Activated T-helper 2 cell treated with anti-CD3 and anti-CD28 coated beads, Interferon-gamma antibody, Interleukin-2, Interleukin-4, amounts not matched to agents 10 μg/mL and 5 μg/mL and 100 μg/mL, durations not matched to agents 14 hours and 24 hours and 36 hours (primary cell): ENCODE measurements at regions of chr12 and their contacts with region 1.

Region 1: GRCh38 chr12:98424726-98425401 is 90.5 kb upstream of the TMPO start:
- DNase-seq: peak; percentile 26
- H3K4me3 Mint-ChIP-seq: no peak overlapping the region
- H3K27ac Mint-ChIP-seq: no peak overlapping the region
- H3K4me1 Mint-ChIP-seq: peaks cover 5% of the 10 kb centered on the region
- H3K27me3 Mint-ChIP-seq: no peaks in the 10 kb centered on the region

Region 2: GRCh38 chr12:98453070-98453469 is 28.2 kb after region 1 on chr12:
- intact Hi-C with region 1: loop called (anchors 1 kb)
- DNase-seq: no peak
- H3K4me3 Mint-ChIP-seq: no peak overlapping the region
- H3K27ac Mint-ChIP-seq: no peak overlapping the region
- H3K4me1 Mint-ChIP-seq: peaks cover 11% of the 10 kb centered on the region
- H3K27me3 Mint-ChIP-seq: peaks cover 24% of the 10 kb centered on the region

Region 3: GRCh38 chr12:98516184-98516873 is 91.5 kb after region 1 on chr12:
- intact Hi-C with region 1: loop called (anchors 1 kb)
- DNase-seq: peak; percentile 83
- H3K4me3 Mint-ChIP-seq: peak overlapping the region; percentile 92
- H3K27ac Mint-ChIP-seq: peak overlapping the region; percentile 98
- H3K4me1 Mint-ChIP-seq: peaks cover 22% of the 10 kb centered on the region
- H3K27me3 Mint-ChIP-seq: no peaks in the 10 kb centered on the region

Region 4: GRCh38 chr12:98532681-98533304 is 107.9 kb after region 1 on chr12:
- intact Hi-C with region 1: loop called (anchors 5 kb)
- DNase-seq: no peak
- H3K4me3 Mint-ChIP-seq: no peak overlapping the region
- H3K27ac Mint-ChIP-seq: no peak overlapping the region
- H3K4me1 Mint-ChIP-seq: peaks cover 29% of the 10 kb centered on the region
- H3K27me3 Mint-ChIP-seq: no peaks in the 10 kb centered on the region

Region 5: GRCh38 chr12:98653866-98654493 is 229.1 kb after region 1 on chr12:
- intact Hi-C with region 1: loop called (anchors 10 kb)
- DNase-seq: no peak
- H3K4me3 Mint-ChIP-seq: no peak overlapping the region
- H3K27ac Mint-ChIP-seq: no peak overlapping the region
- H3K4me1 Mint-ChIP-seq: peaks cover 20% of the 10 kb centered on the region
- H3K27me3 Mint-ChIP-seq: no peaks in the 10 kb centered on the region